ENCODE measurements at regions of chr21 and their contacts with region 1.

Region 1: GRCh38 chr21:45129189-45129923 is 55.0 kb downstream of the ADARB1 start:
- DNase-seq: peak in 1 of 10 donors; percentile 50
- H3K4me3 ChIP-seq: no peak overlapping the region
- H3K27ac ChIP-seq: peak overlapping the region in 35 of 59 donors; percentile 4 to 76 (median 44)
- H3K27me3 ChIP-seq: no peaks in the 10 kb centered on the region
- CTCF ChIP-seq: no peak

Region 2: GRCh38 chr21:44949779-44950198 is 179.6 kb before region 1 on chr21:
- intact Hi-C with region 1: loop called (anchors 1 to 2 kb)
- DNase-seq: peak; percentile 59 to 85 (median 73)
- H3K4me3 ChIP-seq: no peak overlapping the region
- H3K27ac ChIP-seq: peak overlapping the region in 6 of 59 donors; percentile 18 to 50 (median 38)
- H3K27me3 ChIP-seq: no peaks in the 10 kb centered on the region
- CTCF ChIP-seq: peak; percentile 57 to 97 (median 88)

Region 3: DNA sequence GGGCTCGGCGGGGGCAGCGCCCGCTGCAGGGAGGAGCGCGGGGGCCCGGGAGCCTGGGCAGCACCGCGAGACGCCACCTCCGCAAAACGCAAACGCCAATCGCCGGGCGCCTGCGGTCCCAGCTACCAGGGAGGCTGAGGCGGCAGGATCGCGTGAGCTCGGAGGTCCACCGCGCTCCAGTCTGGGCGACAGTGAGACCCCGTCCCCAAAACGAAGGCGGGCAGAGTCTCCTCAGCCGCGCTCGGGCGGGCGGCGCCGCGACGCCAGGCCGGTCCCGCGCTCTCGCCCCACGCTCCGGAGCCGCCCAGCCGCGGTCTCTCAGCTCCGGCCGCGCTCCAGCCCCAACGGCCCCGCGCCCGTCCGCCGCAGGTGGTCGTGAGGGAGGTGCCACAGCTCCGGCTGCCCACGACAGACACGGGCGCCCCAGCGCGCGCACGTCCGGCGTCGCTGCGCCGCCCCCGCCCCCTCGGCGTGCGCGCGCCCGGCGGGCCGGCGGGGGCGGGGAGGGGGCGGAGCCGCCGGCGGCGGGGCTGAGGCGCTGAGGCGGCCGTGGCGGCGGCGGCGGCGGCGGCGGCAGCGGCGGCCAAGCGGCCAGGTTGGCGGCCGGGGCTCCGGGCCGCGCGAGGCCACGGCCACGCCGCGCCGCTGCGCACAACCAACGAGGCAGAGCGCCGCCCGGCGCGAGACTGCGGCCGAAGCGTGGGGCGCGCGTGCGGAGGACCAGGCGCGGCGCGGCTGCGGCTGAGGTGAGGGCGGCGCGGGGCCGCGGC is 55.1 kb before region 1 on chr21 and contains the start of gene ADARB1:
- intact Hi-C with region 1: no loop called
- DNase-seq: peak in 5 of 10 donors; percentile 29 to 83 (median 70)
- H3K4me3 ChIP-seq: peak within 1 kb of the TSS; percentile 71 to 98 (median 84)
- H3K27ac ChIP-seq: peak within 1 kb of the TSS in 55 of 59 donors; percentile 15 to 96 (median 87)
- H3K27me3 ChIP-seq: no peaks in the 10 kb centered on the region
- CTCF ChIP-seq: peak in 1 of 56 donors; percentile 13
- total RNA-seq, gene ADARB1: 22.6 to 83.5 (median 57.4) TPM